Spleen (tissue), 13 donors: ENCODE measurements at regions of chr5 and their contacts with region 1.

Region 1: GRCh38 chr5:149141224-149141956 is at the start of gene ABLIM3:
- DNase-seq: peak; percentile 93
- H3K4me3 ChIP-seq: peak within 1 kb of the TSS; percentile 57 to 83 (median 62)
- H3K27ac ChIP-seq: peak within 1 kb of the TSS in 7 of 8 donors; percentile 41 to 81 (median 60)
- H3K4me1 ChIP-seq: peaks cover 3 to 36% (median 21%) of the 10 kb centered on the region in 6 donors
- H3K27me3 ChIP-seq: peaks cover 0 to 48% (median 8%) of the 10 kb centered on the region in 7 donors
- CTCF ChIP-seq: peak; percentile 70 to 97 (median 91)
- POLR2A ChIP-seq: no peak
- total RNA-seq, gene ABLIM3: 12.8 to 32.9 (median 22.0) TPM

Region 2: GRCh38 chr5:149228618-149229297 is 87.4 kb after region 1 on chr5:
- intact Hi-C with region 1: loop called (anchors 10 kb)
- DNase-seq: no peak
- H3K4me3 ChIP-seq: no peak overlapping the region
- H3K27ac ChIP-seq: peak overlapping the region in 7 of 8 donors; percentile 23 to 59 (median 48)
- H3K4me1 ChIP-seq: peaks cover 4 to 31% (median 14%) of the 10 kb centered on the region in 6 donors
- H3K27me3 ChIP-seq: peaks cover 0 to 39% (median 3%) of the 10 kb centered on the region in 7 donors
- CTCF ChIP-seq: peak; percentile 26 to 84 (median 58)
- POLR2A ChIP-seq: no peak